BJ (cell line): ENCODE measurements at regions of chr2 and their contacts with region 1.

Region 1: GRCh38 chr2:101405351-101405899 is 18.1 kb upstream of the CREG2 start:
- DNase-seq: no peak
- H3K4me3 ChIP-seq: no peak overlapping the region
- H3K27me3 ChIP-seq: no peaks in the 10 kb centered on the region
- CTCF ChIP-seq: no peak

Region 2: DNA sequence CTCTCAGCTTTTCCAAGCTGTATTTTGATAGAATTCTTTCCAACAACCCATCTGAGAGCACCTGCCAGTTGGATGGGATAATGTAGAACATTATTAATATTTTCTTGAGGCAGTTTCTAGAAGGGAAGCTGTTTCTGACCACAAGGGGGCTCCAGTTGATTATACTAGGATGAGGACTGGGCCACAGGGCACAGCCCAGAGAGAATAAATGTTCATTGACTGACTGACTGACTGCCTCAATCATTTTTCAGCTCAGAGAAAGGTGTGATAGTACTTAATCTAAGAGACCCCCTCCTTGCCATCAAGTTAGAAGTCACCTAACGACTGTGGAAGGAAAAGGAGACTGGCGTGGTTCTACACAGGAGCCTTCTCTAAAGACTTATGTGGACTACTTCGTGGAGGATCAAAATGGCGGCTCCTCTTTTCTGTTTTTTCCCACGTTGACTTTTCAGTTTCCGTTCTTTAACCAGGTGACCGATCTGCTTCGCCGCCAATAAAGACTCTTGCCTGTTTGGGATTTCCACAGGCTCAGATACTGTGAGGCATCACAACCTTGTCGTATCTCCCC is 13.8 kb after region 1 on chr2:
- CTCF ChIA-PET with region 1: interaction called, 38 read pairs
- POLR2A ChIA-PET with region 1: no interaction called
- DNase-seq: no peak
- H3K4me3 ChIP-seq: no peak overlapping the region
- H3K27me3 ChIP-seq: no peaks in the 10 kb centered on the region
- CTCF ChIP-seq: peak; percentile 78